A549 (cell line): ENCODE measurements at regions of chr12 and their contacts with region 1.

Region 1: DNA sequence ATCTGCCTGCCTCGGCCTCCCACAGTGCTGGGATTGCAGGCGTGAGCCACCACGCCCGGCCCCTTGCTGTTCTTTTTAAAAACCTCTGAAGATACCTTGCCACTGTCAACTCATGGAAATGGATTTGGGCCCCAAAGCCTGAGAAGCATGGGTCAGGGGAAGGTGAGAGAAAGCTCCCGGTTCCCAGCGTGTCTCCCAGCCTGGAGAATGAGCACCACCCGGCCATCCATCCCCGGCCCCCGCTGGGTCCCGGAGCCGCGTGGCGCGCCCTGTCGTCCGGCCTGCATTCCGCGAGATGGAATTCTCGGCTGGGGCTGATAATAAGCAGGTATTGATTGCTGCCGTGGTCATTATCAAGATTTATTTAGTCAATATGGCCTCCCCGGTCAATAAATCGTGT is 126.5 kb upstream of the MYL2 start:
- DNase-seq: no peak
- ATAC-seq: no peak
- H3K4me3 ChIP-seq: no peak overlapping the region
- H3K27ac ChIP-seq: no peak overlapping the region
- H3K4me1 ChIP-seq: no peaks in the 10 kb centered on the region
- CTCF ChIP-seq: no peak
- EP300 ChIP-seq: no peak
- POLR2A ChIP-seq: no peak
- RAD21 ChIP-seq: no peak

Region 2: DNA sequence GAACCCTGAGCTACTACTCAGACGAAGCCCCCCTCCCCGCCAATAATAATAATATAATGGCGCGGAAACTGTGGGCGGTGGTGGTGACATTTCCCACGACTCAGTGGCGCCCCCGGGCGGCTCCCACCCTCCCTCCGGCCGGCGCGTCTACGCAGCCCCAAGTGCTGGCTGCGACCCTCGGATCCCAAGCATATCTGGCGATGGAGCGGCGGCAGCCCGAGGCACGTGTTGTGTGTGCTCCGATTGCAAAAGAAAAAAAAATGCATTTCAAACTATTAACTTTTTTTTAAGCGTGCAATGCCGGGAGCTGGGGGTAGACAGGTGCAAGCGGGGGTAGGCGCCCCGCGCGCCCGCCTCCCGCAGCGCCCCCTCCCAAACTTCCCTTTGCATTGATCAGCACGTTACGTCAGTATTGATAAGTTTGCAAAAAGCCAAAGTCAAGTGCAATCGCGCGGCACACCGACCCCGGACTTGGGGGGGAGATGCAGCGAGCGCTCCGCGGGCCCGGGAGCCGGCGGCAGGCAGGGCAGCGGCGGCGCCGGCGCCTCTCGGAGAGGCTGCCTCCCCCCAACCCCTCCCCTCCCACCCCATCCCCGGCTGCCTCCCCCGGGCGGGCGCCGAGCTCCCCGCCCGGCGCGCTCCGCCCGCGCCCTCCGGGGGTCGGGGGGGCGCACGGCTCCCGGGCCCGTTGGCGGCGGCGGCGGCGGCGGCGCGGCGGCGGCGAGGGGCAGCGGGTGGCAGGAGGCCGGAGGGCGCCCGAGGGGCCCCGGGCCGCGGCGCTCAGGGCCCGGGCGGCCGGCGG is 13.4 kb before region 1 on chr12:
- CTCF ChIA-PET with region 1: interaction called, 19 read pairs
- POLR2A ChIA-PET with region 1: no interaction called
- DNase-seq: no peak
- ATAC-seq: no peak
- H3K4me3 ChIP-seq: peak overlapping the region; percentile 61
- H3K27ac ChIP-seq: peak overlapping the region; percentile 30 to 70; a peak in 3 of 6 replicates
- H3K4me1 ChIP-seq: peaks cover 21% of the 10 kb centered on the region
- CTCF ChIP-seq: peak; percentile 40
- EP300 ChIP-seq: no peak
- POLR2A ChIP-seq: no peak
- RAD21 ChIP-seq: no peak; a peak in 1 of 5 replicates